AG04450 (cell line): ENCODE measurements at regions of chr5 and their contacts with region 1.

Region 1: GRCh38 chr5:95781101-95781583 is 41.4 kb downstream of the GLRX start:
- DNase-seq: no peak
- H3K4me3 ChIP-seq: no peak overlapping the region
- H3K27ac ChIP-seq: no peak overlapping the region
- H3K27me3 ChIP-seq: no peaks in the 10 kb centered on the region
- CTCF ChIP-seq: peak; percentile 88

Region 2: GRCh38 chr5:95760273-95761191 is 20.6 kb before region 1 on chr5:
- CTCF ChIA-PET with region 1: interaction called, 12 read pairs
- POLR2A ChIA-PET with region 1: interaction called, 8 read pairs
- DNase-seq: peak; percentile 96
- H3K4me3 ChIP-seq: peak overlapping the region; percentile 17; the same call in 1 of the 2 replicates
- H3K27ac ChIP-seq: peak overlapping the region; percentile 77
- H3K27me3 ChIP-seq: no peaks in the 10 kb centered on the region
- CTCF ChIP-seq: no peak

Region 3: GRCh38 chr5:95809414-95809960 is 28.3 kb after region 1 on chr5:
- CTCF ChIA-PET with region 1: interaction called, 13 read pairs
- POLR2A ChIA-PET with region 1: interaction called, 7 read pairs
- DNase-seq: no peak
- H3K4me3 ChIP-seq: no peak overlapping the region
- H3K27ac ChIP-seq: peak overlapping the region; percentile 55
- H3K27me3 ChIP-seq: no peaks in the 10 kb centered on the region
- CTCF ChIP-seq: no peak

Region 4: GRCh38 chr5:95835682-95836385 is 54.7 kb after region 1 on chr5:
- CTCF ChIA-PET with region 1: interaction called, 13 read pairs
- POLR2A ChIA-PET with region 1: no interaction called
- DNase-seq: no peak
- H3K4me3 ChIP-seq: no peak overlapping the region
- H3K27ac ChIP-seq: no peak overlapping the region
- H3K27me3 ChIP-seq: no peaks in the 10 kb centered on the region
- CTCF ChIP-seq: no peak

Region 5: DNA sequence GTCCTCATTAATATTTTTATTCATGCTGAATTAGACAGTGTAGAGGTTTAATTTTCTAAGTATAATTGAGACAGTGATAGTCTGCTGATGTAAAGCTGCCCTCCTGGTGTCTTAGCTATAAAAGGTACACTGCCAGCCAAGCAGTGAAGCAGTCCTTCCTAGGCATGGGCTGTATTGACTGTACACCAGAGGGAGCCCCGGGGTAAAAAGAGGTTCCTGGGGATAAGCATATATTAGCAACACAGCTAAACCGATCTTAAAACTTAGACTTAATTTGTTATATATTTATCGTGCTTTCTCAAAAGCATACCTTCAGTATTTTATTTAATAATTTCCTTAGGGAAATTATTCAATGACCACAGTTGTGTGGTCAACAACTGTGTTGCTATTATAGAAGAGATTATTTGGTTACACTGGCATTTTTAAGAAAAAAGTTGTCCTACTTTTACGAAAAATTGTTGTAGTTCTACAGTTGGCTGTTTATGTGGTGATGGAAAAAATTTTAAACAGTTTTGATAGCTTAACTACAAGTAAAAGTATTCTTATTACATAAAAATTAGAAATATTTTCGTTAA is 111.7 kb after region 1 on chr5:
- CTCF ChIA-PET with region 1: no interaction called
- POLR2A ChIA-PET with region 1: no interaction called
- DNase-seq: no peak
- H3K4me3 ChIP-seq: no peak overlapping the region
- H3K27ac ChIP-seq: no peak overlapping the region
- H3K27me3 ChIP-seq: no peaks in the 10 kb centered on the region
- CTCF ChIP-seq: peak; percentile 60